ENCODE measurements at regions of chr2 and their contacts with region 1.

Region 1: GRCh38 chr2:41853427-41854216 is 194.2 kb upstream of the PKDCC start:
- DNase-seq: no peak
- ATAC-seq: no peak

Region 2: GRCh38 chr2:41879235-41879916 is 25.8 kb after region 1 on chr2:
- intact Hi-C with region 1: no loop called
- DNase-seq: no peak
- ATAC-seq: peak; percentile 35

Region 3: DNA sequence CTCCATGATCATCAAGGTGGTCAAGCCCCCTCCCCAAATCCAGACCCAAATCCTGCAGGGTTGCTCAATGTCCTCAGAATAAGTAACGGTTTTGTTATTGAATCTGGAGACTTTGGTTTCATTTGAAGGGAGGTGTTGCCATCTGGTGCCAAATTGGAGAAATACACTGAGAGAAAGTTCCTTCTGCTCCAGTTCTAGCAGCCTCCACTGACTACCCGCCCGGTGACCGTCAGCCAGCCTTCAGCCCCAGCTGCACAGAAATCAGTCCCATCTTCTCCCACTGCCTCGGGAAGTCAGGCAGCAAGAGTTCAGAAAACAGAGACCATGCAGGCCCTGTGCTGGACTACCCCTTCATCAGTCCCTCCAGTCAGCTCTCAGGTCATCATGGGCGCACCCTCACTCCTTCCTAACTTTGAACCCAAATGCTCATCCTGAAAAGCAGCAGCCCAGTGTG is 232.9 kb after region 1 on chr2:
- intact Hi-C with region 1: loop called (anchors 5 kb)
- DNase-seq: no peak
- ATAC-seq: peak; percentile 53

Measured in Right ventricle myocardium inferior (tissue), 1 donor.